ENCODE measurements at regions of chr2 and their contacts with region 1.

Region 1: GRCh38 chr2:26764078-26764887 is at the start of gene SLC35F6:
- DNase-seq: no peak
- ATAC-seq: peak; percentile 93
- H3K4me3 ChIP-seq: peak within 1 kb of the TSS; percentile 89
- H3K27ac ChIP-seq: peak within 1 kb of the TSS; percentile 85
- H3K4me1 ChIP-seq: peaks cover 14% of the 10 kb centered on the region; the same call in 1 of the 2 replicates
- H3K27me3 ChIP-seq: no peaks in the 10 kb centered on the region
- CTCF ChIP-seq: no peak
- EP300 ChIP-seq: 0 out of 4 replicates have a peak, but pooled peaks of 1 of the 2 experiments have one; percentile 19
- POLR2A ChIP-seq: peak; percentile 94
- RAD21 ChIP-seq: no peak
- polyA plus RNA-seq, gene SLC35F6: 4.0 to 9.6 TPM

Region 2: GRCh38 chr2:26785431-26786206 is 21.3 kb after region 1 on chr2 and contains the start of gene CENPA:
- CTCF ChIA-PET with region 1: no interaction called
- POLR2A ChIA-PET with region 1: interaction called, 3 read pairs
- RAD21 ChIA-PET with region 1: no interaction called
- SMC1A ChIA-PET with region 1: no interaction called
- in situ Hi-C with region 1: no loop called
- intact Hi-C with region 1: loop called (anchors 1 kb)
- DNase-seq: peak; percentile 99
- ATAC-seq: peak; percentile 99
- H3K4me3 ChIP-seq: peak within 1 kb of the TSS; percentile 79
- H3K27ac ChIP-seq: peak within 1 kb of the TSS; percentile 81
- H3K4me1 ChIP-seq: peaks cover 3% of the 10 kb centered on the region; the same call in 1 of the 2 replicates
- H3K27me3 ChIP-seq: no peaks in the 10 kb centered on the region
- CTCF ChIP-seq: 0 out of 6 replicates have a peak, but pooled peaks of 1 of the 3 experiments have one; percentile 1
- EP300 ChIP-seq: no peak
- POLR2A ChIP-seq: peak; percentile 87
- RAD21 ChIP-seq: no peak
- polyA plus RNA-seq, gene CENPA: 8.1 to 19.0 TPM

Measured in GM12878 (cell line).